Sciatic nerve (tissue), 2 donors: ENCODE measurements at regions of chr5 and their contacts with region 1.

Region 1: GRCh38 chr5:172188033-172188892 is at the start of gene STK10:
- DNase-seq: peak; percentile 95
- ATAC-seq: peak; percentile 96
- total RNA-seq, gene STK10: 89.4 TPM

Region 2: DNA sequence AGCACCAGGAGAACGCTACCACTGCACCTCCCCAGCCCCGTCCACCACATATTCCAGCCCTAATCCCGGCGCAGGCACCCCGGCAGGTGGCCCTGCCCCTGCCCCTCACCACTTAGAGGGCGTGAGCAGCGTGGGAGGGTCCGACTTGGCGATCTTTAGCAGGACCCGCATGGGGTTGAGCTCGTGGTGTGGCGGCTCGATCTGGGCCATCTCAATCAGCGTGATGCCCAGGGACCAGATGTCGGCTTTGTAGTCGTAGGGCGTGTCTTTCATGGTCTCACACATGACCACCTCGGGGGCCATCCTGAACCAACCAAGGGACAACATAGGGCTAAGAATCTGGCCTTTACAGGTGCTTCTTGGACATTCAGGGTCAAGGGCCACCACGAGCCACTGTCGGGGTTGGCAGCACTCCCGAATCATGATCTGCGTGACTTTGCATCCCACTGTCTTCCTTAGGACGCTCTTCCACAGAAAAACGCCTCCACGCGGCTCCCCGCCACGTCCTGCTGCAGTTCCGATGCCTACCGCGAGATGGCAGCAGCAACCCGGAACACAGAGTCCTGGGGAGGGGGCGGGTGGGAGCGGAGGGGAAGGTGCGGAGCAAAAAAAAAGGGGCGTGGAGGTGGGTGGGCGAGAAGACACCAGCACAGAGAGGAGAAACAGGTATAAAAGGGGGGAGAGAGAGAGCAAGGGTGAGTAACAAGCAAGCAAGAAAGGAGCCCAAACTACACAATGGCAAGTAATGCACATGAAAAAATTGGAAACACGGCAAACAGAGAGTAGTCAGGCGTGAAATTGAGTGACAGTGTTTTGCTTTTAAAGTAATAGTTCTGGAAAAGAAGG is 81.5 kb before region 1 on chr5:
- intact Hi-C with region 1: loop called (anchors 5 kb)
- DNase-seq: peak; percentile 83
- ATAC-seq: peak; percentile 66

Region 3: GRCh38 chr5:172245703-172246125 is 57.5 kb after region 1 on chr5:
- intact Hi-C with region 1: no loop called
- DNase-seq: no peak
- ATAC-seq: peak; percentile 70